ENCODE measurements at regions of chr2 and their contacts with region 1.

Region 1: GRCh38 chr2:127857265-127857808 is 618 bp downstream of the POLR2D start:
- DNase-seq: peak; percentile 32
- H3K4me3 Mint-ChIP-seq: peak overlapping the region; percentile 99
- H3K27ac Mint-ChIP-seq: peak overlapping the region; percentile 91
- H3K4me1 Mint-ChIP-seq: peaks cover 53% of the 10 kb centered on the region
- H3K27me3 Mint-ChIP-seq: no peaks in the 10 kb centered on the region

Region 2: GRCh38 chr2:127701193-127701650 is 156.1 kb before region 1 on chr2 and contains the start of gene SFT2D3:
- CTCF ChIA-PET with region 1: no interaction called
- intact Hi-C with region 1: loop called (anchors 1 kb)
- DNase-seq: peak; percentile 94
- H3K4me3 Mint-ChIP-seq: peak within 1 kb of the TSS; percentile 88
- H3K27ac Mint-ChIP-seq: peak within 1 kb of the TSS; percentile 95
- H3K4me1 Mint-ChIP-seq: peaks cover 38% of the 10 kb centered on the region
- H3K27me3 Mint-ChIP-seq: no peaks in the 10 kb centered on the region
- total RNA-seq, gene SFT2D3: 3.1 to 3.3 TPM

Region 3: GRCh38 chr2:127874378-127875271 is 17.3 kb after region 1 on chr2:
- CTCF ChIA-PET with region 1: no interaction called
- intact Hi-C with region 1: loop called (anchors 1 kb)
- DNase-seq: peak; percentile 67
- H3K4me3 Mint-ChIP-seq: no peak overlapping the region
- H3K27ac Mint-ChIP-seq: peak overlapping the region; percentile 48
- H3K4me1 Mint-ChIP-seq: peaks cover 37% of the 10 kb centered on the region
- H3K27me3 Mint-ChIP-seq: no peaks in the 10 kb centered on the region

Region 4: DNA sequence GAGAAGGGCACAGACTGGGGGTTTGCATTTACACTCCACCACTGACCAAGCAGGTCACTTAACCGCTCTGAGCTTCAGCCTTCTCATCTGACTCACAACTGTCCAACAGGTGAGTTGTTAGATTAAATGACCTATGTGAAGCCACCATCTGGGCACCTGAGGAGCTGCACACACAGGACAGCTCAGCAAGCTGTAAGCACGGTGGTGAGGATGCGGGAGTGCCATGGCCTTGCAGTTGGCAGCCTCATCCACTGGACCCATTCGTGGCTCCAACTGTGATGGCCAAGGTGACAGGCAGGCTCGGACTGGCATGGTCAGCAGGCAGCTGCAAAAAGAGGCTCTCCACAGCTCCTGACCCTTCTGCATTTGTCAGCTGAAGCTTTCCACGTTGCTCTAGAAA is 51.7 kb after region 1 on chr2:
- CTCF ChIA-PET with region 1: no interaction called
- intact Hi-C with region 1: no loop called
- DNase-seq: no peak
- H3K4me3 Mint-ChIP-seq: no peak overlapping the region
- H3K27ac Mint-ChIP-seq: no peak overlapping the region
- H3K4me1 Mint-ChIP-seq: no peaks in the 10 kb centered on the region
- H3K27me3 Mint-ChIP-seq: peaks cover 4% of the 10 kb centered on the region

Region 5: GRCh38 chr2:128090945-128091725 is 233.8 kb after region 1 on chr2 and contains the start of gene UGGT1:
- CTCF ChIA-PET with region 1: no interaction called
- intact Hi-C with region 1: loop called (anchors 1 kb)
- DNase-seq: peak; percentile 96
- H3K4me3 Mint-ChIP-seq: peak within 1 kb of the TSS; percentile 90
- H3K27ac Mint-ChIP-seq: peak within 1 kb of the TSS; percentile 86
- H3K4me1 Mint-ChIP-seq: peaks cover 42% of the 10 kb centered on the region
- H3K27me3 Mint-ChIP-seq: no peaks in the 10 kb centered on the region
- total RNA-seq, gene UGGT1: 37.3 to 40.1 TPM

Measured in activated naive CD4-positive, alpha-beta T cell treated with anti-CD3 and anti-CD28 coated beads for 36 hours (primary cell).